HepG2 (cell line): ENCODE measurements at regions of chr2 and their contacts with region 1.

Region 1: GRCh38 chr2:88307817-88308216 is 137.7 kb downstream of the THNSL2 start:
- DNase-seq: peak; percentile 65
- ATAC-seq: peak; percentile 71
- H3K4me3 ChIP-seq: no peak overlapping the region
- H3K27ac ChIP-seq: no peak overlapping the region
- H3K4me1 ChIP-seq: no peaks in the 10 kb centered on the region
- H3K27me3 ChIP-seq: no peaks in the 10 kb centered on the region; a peak in 1 of 5 replicates
- CTCF ChIP-seq: peak; percentile 80
- EP300 ChIP-seq: no peak
- POLR2A ChIP-seq: no peak
- RAD21 ChIP-seq: peak; percentile 79

Region 2: DNA sequence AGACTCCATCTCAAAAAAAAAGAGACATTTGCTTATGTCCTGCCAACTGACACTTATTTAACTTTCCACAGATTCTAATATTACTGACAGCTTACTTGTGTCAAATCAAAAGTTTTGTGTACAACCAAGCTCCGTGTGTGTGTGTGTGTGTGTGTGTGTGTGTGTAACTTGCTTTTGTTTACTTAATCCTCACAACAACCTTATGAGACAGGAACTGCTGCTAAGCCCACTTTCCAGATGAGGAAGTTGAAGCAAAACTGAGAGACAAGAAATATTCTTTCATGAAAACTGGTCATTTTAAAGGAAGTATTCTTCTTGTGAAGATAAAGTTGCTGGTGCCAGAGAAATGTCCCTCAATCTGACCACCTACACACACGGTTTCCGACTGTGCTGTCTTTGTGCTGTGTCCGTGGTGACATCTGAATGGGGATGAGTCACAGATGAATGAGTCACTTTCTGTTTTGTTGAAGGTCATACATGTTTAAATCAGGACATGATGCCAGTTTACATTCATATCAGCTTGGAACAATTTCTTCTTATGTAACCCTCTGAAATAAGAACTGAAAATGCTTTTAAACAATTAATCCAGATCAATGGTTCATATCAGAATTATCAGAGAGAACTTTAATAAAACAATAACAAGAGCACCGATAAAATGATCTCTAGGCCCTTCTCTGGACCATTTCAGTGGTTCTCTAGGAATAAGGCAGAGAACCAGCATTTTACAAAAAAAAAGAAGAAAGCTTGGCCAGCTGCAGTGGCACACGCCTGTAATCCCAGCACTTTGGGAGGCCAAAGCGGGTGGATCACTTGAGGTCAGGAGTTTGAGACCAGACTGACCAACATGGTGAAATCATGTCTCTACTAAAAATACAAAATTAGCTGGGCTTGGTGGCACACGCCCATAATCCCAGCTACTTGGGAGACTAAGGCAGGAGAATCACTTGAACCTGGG is 42.2 kb before region 1 on chr2:
- CTCF ChIA-PET with region 1: no interaction called
- POLR2A ChIA-PET with region 1: no interaction called
- in situ Hi-C with region 1: no loop called
- intact Hi-C with region 1: loop called (anchors 1 kb)
- DNase-seq: peak; percentile 86
- ATAC-seq: peak; percentile 93
- H3K4me3 ChIP-seq: no peak overlapping the region
- H3K27ac ChIP-seq: no peak overlapping the region
- H3K4me1 ChIP-seq: peaks cover 29% of the 10 kb centered on the region
- H3K27me3 ChIP-seq: peaks cover 0 to 8% of the 10 kb centered on the region in 2 experiments; a peak in 2 of 5 replicates
- CTCF ChIP-seq: no peak
- EP300 ChIP-seq: peak in 1 of 2 experiments; percentile 53; a peak in 1 of 4 replicates
- POLR2A ChIP-seq: no peak
- RAD21 ChIP-seq: no peak

Region 3: GRCh38 chr2:88321449-88322248 is 13.8 kb after region 1 on chr2:
- CTCF ChIA-PET with region 1: no interaction called
- POLR2A ChIA-PET with region 1: no interaction called
- in situ Hi-C with region 1: no loop called
- intact Hi-C with region 1: no loop called
- DNase-seq: peak; percentile 65
- ATAC-seq: peak; percentile 96
- H3K4me3 ChIP-seq: no peak overlapping the region
- H3K27ac ChIP-seq: no peak overlapping the region
- H3K4me1 ChIP-seq: peaks cover 15% of the 10 kb centered on the region
- H3K27me3 ChIP-seq: peaks cover 0 to 6% of the 10 kb centered on the region in 2 experiments; a peak in 2 of 5 replicates
- CTCF ChIP-seq: no peak
- EP300 ChIP-seq: peak in 1 of 2 experiments; percentile 55; a peak in 2 of 4 replicates
- POLR2A ChIP-seq: no peak
- RAD21 ChIP-seq: no peak

Region 4: DNA sequence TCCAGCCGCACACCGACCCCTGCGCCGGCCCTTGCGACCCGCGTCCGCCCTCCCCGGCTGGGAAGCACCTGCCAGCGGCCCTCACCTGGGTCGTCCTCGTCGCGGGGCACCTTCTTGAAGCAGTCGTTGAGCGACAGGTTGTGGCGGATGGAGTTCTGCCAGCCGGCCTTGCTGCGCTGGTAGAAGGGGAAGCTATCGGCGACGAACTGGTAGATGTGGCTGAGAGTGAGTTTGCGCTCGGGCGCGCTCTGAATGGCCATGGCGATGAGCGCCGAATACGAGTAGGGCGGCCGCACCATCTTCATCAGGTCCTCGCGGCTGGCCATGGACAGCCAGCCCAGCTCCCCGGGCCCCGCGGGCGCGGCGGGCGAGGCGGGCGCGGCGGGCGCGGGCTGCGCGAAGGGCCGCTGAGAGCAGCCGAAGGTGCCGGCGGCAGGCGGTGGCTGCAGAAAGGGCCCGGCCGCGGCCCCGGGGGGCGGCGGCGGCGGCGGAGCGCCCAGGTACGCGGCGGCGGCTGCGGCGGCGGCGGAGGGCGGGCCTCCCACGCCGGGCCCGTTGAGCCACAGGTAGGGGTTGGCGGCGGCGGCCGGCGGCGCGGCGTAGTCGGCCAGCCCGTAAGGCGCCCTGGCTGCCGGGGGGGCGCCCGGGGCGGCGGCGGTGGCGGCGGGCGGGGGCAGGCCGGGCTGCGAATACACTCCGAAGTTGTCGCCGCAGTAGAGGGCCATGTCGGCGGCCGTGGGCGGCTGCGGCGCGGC is 144.2 kb after region 1 on chr2:
- CTCF ChIA-PET with region 1: no interaction called
- POLR2A ChIA-PET with region 1: no interaction called
- in situ Hi-C with region 1: no loop called
- intact Hi-C with region 1: loop called (anchors 1 kb)
- DNase-seq: no peak
- ATAC-seq: peak; percentile 15; the same call in 1 of the 3 replicates
- H3K4me3 ChIP-seq: no peak overlapping the region; a peak in 1 of 6 replicates
- H3K27ac ChIP-seq: no peak overlapping the region
- H3K4me1 ChIP-seq: no peaks in the 10 kb centered on the region
- H3K27me3 ChIP-seq: peaks cover 0 to 29% of the 10 kb centered on the region in 2 experiments; a peak in 3 of 5 replicates
- CTCF ChIP-seq: no peak
- EP300 ChIP-seq: no peak
- POLR2A ChIP-seq: no peak
- RAD21 ChIP-seq: no peak